Sigmoid colon (tissue), 7 donors: ENCODE measurements at regions of chr22 and their contacts with region 1.

Region 1: GRCh38 chr22:50326959-50327710 is at the start of gene DENND6B:
- DNase-seq: peak; percentile 88
- H3K4me3 ChIP-seq: peak within 1 kb of the TSS; percentile 63 to 81 (median 70)
- H3K27ac ChIP-seq: peak within 1 kb of the TSS; percentile 89 to 96 (median 93)
- H3K4me1 ChIP-seq: peaks cover 0 to 18% (median 16%) of the 10 kb centered on the region in 4 donors
- H3K27me3 ChIP-seq: no peaks in the 10 kb centered on the region
- CTCF ChIP-seq: peak in 2 of 4 experiments; percentile 35 to 40
- EP300 ChIP-seq: no peak
- POLR2A ChIP-seq: no peak
- total RNA-seq, gene DENND6B: 2.1 to 7.2 (median 2.8) TPM

Region 2: DNA sequence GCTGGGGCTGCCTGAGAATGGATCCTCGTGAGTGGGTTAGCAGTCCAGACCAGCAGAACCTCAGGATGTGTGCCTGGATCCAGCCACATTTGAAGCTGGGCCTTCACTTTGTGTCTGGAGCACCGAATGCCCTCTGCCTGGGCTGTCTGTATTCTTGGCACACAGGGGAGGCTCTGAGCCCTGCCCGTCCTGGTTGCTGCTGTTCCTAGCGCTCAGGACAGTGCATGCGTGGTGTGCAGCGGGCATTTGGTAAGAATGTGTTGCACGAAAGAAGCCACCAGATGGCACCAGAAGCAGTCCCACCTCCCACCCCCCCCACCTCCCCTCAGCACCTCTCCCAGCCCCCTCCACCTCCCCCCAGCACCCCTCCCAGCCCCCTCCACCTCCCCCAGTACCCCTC is 52.8 kb before region 1 on chr22:
- intact Hi-C with region 1: loop called (anchors 1 kb)
- DNase-seq: no peak
- H3K4me3 ChIP-seq: no peak overlapping the region
- H3K27ac ChIP-seq: no peak overlapping the region
- H3K4me1 ChIP-seq: peaks cover 0 to 36% (median 34%) of the 10 kb centered on the region in 4 donors
- H3K27me3 ChIP-seq: peaks cover 4 to 27% (median 23%) of the 10 kb centered on the region in 3 donors
- CTCF ChIP-seq: peak in 1 of 4 experiments; percentile 31
- EP300 ChIP-seq: no peak
- POLR2A ChIP-seq: no peak

Region 3: DNA sequence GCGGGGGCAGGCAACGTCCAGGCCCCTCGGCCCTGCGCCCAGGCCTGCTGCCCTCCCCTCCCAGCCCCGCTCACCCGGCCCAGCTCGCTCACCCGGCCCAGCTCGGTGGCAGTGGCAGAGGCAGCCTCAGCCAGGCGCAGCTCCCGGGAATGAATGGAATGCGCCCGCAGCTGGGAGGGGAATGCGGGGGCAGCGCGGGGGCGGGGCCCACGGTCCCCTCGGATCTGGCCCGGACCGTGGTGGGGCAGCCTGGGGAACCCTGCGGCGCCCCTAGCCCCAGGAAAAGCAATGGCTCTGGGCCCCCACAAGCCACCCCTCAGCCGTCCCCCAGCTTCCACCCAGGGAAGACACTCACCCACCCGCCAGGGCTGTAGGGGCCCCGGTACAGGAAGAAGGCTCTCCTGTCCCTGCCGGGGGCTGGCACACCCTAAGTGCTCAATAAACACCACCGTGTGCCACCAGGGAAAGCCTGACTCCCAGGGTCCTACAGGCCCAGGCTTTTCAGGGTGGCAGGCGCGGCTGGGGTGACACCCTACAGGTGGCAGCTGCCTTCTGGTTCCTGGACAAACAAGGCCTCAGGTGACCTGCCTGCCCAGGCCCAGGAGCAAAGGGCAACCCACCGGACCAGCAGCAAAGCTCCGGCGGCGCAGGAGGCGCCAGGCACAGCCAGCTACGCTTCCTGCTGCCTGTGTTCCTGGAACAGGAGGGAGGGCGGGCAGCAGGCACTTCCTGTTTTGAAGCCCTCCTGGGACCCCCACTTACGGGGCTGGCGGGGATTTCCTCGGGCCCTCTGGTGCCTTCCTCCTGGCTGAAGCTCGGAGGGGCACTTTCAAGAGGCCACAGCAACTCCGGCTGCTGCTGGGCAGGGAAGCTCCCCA is 33.5 kb before region 1 on chr22:
- intact Hi-C with region 1: loop called (anchors 5 kb)
- DNase-seq: no peak
- H3K4me3 ChIP-seq: peak overlapping the region in 3 of 4 donors; percentile 25 to 38 (median 26)
- H3K27ac ChIP-seq: peak overlapping the region; percentile 80 to 86 (median 84)
- H3K4me1 ChIP-seq: peaks cover 0 to 65% (median 54%) of the 10 kb centered on the region in 4 donors
- H3K27me3 ChIP-seq: no peaks in the 10 kb centered on the region
- CTCF ChIP-seq: no peak
- EP300 ChIP-seq: no peak
- POLR2A ChIP-seq: no peak

Region 4: DNA sequence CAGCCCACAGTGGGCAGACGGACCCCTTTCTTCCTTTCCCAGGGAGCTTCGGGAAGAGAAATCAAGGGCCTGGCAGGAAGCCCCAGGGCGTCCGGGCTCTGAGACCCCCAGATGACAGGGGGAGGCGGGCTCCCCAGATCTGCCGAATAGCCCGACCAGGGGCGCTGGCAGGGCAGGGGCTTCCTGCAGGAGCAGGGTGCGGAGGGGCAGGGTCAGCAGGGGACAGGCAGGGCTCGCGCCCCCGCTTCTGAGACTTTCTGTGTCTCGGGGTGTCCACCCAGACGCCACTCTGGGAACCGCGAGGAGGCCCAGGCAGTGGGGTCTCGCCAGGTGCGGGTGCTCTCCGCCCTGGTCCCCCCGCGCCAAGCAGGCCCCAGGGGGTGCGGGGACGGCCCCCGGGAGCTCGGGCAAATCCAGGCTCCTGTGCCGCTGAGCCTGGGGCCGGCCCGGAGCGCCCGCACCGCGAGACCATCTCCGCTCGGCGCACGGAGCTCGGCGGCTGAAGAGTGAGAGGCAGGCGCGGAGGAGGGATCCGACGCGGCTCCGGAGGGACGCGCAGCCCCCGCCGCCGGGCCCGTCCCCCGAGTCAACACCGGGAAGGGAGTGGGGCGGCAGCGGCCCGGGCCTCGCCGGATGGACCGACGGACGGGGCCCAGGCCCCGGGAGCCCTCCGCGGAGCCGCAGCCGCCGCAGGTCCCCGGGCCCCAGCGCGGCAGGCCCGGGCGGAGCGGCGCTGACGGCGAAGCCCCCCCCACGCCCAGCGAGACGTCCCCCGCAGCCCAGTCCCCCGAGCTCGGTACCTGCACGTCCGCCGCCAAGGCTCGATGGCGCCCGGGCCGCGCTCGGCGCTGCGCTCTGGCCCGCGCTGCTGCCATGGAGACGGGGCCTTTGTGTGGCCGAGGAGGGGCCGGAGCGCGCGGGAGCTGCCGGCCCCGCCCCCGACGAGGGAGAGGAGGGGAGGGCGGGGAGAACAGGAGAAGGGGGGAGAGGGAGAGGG is 20.1 kb before region 1 on chr22 and contains the start of gene PLXNB2:
- intact Hi-C with region 1: loop called (anchors 2 kb)
- DNase-seq: peak; percentile 93
- H3K4me3 ChIP-seq: peak within 1 kb of the TSS; percentile 66 to 83 (median 80)
- H3K27ac ChIP-seq: peak within 1 kb of the TSS; percentile 89 to 96 (median 90)
- H3K4me1 ChIP-seq: peaks cover 3 to 70% (median 58%) of the 10 kb centered on the region in 4 donors
- H3K27me3 ChIP-seq: no peaks in the 10 kb centered on the region
- CTCF ChIP-seq: no peak
- EP300 ChIP-seq: no peak
- POLR2A ChIP-seq: no peak
- total RNA-seq, gene PLXNB2: 60.4 to 150 (median 68.7) TPM

Region 5: DNA sequence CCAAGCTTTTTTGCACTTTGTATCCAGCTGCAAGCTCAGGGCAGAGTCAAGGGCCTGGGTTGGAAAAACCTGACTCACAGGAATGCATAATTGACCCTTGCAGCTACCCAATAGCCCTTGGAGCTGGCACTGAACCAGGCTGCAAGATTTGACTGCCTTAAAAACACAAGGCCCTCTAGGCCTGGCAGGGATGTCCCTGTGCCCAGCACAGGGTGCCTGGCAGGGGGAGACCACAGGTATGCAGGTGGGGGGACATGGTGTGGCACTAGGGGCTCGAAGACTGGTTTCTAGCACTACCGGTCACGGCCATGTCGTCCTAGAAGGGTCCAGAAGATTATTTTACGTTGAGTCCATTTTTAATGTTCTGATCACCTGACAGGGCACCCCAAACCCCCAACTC is 117.5 kb after region 1 on chr22:
- intact Hi-C with region 1: no loop called
- DNase-seq: no peak
- H3K4me3 ChIP-seq: no peak overlapping the region
- H3K27ac ChIP-seq: peak overlapping the region in 3 of 4 donors; percentile 37 to 60 (median 46)
- H3K4me1 ChIP-seq: peaks cover 0 to 15% (median 6%) of the 10 kb centered on the region in 4 donors
- H3K27me3 ChIP-seq: no peaks in the 10 kb centered on the region
- CTCF ChIP-seq: no peak
- EP300 ChIP-seq: no peak
- POLR2A ChIP-seq: no peak